Mammary epithelial cell (primary cell): ENCODE measurements at regions of chr9 and their contacts with region 1.

Region 1: GRCh38 chr9:107749787-107750444 is 260.3 kb upstream of the KLF4 start:
- DNase-seq: peak; percentile 88
- H3K4me3 ChIP-seq: no peak overlapping the region
- H3K27ac ChIP-seq: peak overlapping the region; percentile 60
- H3K4me1 ChIP-seq: peaks cover 36% of the 10 kb centered on the region
- H3K27me3 ChIP-seq: no peaks in the 10 kb centered on the region
- CTCF ChIP-seq: no peak

Region 2: DNA sequence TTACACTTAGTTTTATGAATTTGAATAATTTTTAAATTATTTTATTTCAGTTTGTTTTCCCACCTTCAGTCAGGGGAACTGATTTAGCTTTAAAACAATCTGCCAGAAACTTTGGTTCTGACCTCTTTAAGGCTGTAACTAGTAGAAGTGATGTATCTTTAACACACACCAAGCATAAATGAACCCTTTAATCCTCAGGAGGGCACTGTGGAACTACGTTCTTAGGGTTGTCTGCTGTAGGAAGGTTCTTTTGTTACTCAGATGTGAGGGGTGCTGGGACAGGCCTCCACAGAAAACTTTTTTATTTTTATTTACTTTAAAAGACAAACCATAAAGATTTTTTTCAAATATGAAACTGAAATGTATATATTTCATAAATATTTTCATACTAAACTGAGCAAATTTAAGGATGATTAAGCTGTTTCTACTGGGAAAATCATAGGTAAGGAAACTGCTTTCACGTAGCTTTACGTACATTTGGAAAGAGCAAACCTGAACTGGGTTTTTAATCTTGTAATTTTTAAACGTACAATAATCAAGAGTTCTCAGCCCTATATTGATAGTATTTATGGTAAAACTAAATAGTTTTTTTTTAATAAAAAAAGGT is 265.7 kb before region 1 on chr9:
- CTCF ChIA-PET with region 1: no interaction called
- dilution Hi-C with region 1: no loop called
- in situ Hi-C with region 1: no loop called
- intact Hi-C with region 1: loop called (anchors 1 kb)
- DNase-seq: peak; percentile 60
- H3K4me3 ChIP-seq: no peak overlapping the region
- H3K27ac ChIP-seq: no peak overlapping the region
- H3K4me1 ChIP-seq: peaks cover 27% of the 10 kb centered on the region
- H3K27me3 ChIP-seq: no peaks in the 10 kb centered on the region
- CTCF ChIP-seq: peak; percentile 34 to 63

Region 3: DNA sequence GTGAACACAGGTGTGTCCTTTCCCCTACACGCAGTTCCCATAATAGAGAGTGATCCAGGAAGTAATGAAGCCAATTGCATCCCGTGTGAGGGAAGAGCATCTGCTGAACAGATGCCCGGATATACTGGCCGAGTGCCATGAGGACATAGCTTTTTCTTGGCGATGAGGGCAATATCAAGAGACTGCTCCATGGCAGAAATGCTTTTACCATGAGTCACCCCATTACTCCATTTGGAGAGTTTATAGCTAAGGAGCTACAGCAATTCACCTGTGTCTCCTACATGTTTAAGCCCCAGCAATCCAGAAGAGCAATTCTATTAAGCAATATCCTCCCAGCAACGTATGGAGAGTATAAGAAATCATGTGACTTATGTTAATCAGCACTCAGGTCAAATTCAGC is 38.4 kb before region 1 on chr9:
- CTCF ChIA-PET with region 1: no interaction called
- dilution Hi-C with region 1: no loop called
- in situ Hi-C with region 1: no loop called
- intact Hi-C with region 1: loop called (anchors 1 kb)
- DNase-seq: peak; percentile 88
- H3K4me3 ChIP-seq: no peak overlapping the region
- H3K27ac ChIP-seq: peak overlapping the region; percentile 75
- H3K4me1 ChIP-seq: peaks cover 53% of the 10 kb centered on the region
- H3K27me3 ChIP-seq: no peaks in the 10 kb centered on the region
- CTCF ChIP-seq: no peak

Region 4: GRCh38 chr9:107914151-107914550 is 164.2 kb after region 1 on chr9:
- CTCF ChIA-PET with region 1: no interaction called
- dilution Hi-C with region 1: no loop called
- in situ Hi-C with region 1: no loop called
- intact Hi-C with region 1: no loop called
- DNase-seq: no peak
- H3K4me3 ChIP-seq: no peak overlapping the region
- H3K27ac ChIP-seq: no peak overlapping the region
- H3K4me1 ChIP-seq: no peaks in the 10 kb centered on the region
- H3K27me3 ChIP-seq: no peaks in the 10 kb centered on the region
- CTCF ChIP-seq: no peak